ENCODE measurements at regions of chr16 and their contacts with region 1.

Region 1: DNA sequence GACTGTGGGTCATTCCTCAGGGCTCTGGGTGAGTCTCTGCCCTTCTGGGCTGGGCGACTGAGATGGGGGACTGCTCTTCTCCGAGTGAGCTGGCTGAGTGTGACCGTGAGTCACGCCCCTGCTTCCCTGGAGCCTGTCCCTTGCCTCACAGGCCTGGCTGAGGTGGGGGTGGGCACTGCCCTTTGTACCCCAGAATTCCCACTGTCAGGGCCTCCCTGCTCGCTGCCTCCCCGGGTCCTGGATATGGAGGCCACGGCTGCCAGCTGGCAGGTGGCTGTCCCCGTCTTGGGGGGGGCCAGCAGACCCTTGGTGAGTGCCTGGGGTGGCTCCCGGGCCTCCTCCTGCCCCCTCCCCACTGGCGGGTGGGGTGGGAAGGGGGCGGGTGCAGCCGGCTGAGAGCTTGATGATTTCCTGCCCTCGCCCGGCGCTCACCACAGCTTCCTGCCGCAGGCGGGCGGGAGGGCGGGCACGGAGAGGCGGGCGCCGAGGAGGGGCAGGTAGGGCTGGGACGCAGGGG is at the start of gene LAT:
- DNase-seq: peak; percentile 86
- ATAC-seq: peak; percentile 62
- H3K4me3 Mint-ChIP-seq: peak within 1 kb of the TSS; percentile 100
- H3K27ac Mint-ChIP-seq: peak within 1 kb of the TSS; percentile 95
- H3K4me1 Mint-ChIP-seq: peaks cover 51% of the 10 kb centered on the region
- H3K27me3 Mint-ChIP-seq: no peaks in the 10 kb centered on the region
- total RNA-seq, gene LAT: 270 to 288 TPM

Region 2: GRCh38 chr16:28974437-28975157 is 10.1 kb before region 1 on chr16 and contains the start of gene SPNS1:
- CTCF ChIA-PET with region 1: interaction called, 17 read pairs
- POLR2A ChIA-PET with region 1: interaction called, 12 read pairs
- DNase-seq: peak; percentile 97
- ATAC-seq: peak; percentile 96
- H3K4me3 Mint-ChIP-seq: peak within 1 kb of the TSS; percentile 98
- H3K27ac Mint-ChIP-seq: peak within 1 kb of the TSS; percentile 97
- H3K4me1 Mint-ChIP-seq: peaks cover 35% of the 10 kb centered on the region
- H3K27me3 Mint-ChIP-seq: no peaks in the 10 kb centered on the region
- total RNA-seq, gene SPNS1: 28.3 to 29.0 TPM

Region 3: DNA sequence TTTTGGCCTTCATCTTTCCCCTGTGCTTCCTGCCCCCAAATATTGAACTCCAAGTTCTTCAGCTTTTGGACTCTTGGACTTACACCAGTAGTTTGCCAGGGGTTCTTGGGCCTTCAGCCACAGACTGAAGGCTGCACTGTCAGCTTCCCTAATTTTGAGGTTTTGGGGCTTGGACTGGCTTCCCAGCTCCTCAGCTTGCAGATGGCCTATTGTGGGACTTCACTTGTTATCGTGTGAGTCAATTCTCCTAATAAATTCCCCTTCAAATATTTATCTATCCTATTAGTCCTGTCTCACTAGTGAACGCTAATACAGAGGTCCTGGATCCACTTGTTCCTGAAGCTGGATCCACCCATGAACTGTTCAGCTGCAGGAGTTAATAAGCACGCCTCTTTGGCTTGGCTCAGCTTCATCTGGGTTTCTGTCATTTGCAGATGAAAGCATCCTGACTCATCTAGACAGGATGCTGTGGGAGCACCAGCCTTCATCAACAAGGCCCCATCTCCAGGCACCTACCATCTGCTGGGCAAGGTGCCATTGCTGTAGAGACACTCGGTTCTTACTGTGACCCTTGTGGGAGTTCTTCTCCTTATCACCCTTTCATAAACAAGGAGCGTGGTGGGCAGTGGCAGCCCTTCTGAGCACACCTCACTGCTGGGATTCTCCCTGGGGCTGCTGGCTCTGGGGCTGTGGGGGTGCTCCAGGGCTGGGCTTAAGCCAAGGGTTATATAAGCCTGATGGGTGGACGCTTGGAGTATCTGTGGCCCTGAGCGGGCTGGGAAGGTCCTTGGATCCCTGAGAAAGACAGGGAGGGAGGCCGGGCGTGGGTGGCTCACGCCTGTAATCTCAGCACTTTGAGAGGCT is 23.3 kb after region 1 on chr16:
- CTCF ChIA-PET with region 1: interaction called, 15 read pairs
- POLR2A ChIA-PET with region 1: interaction called, 24 read pairs
- DNase-seq: peak; percentile 83
- ATAC-seq: peak; percentile 90
- H3K4me3 Mint-ChIP-seq: peak overlapping the region; percentile 19
- H3K27ac Mint-ChIP-seq: peak overlapping the region; percentile 88
- H3K4me1 Mint-ChIP-seq: peaks cover 43% of the 10 kb centered on the region
- H3K27me3 Mint-ChIP-seq: no peaks in the 10 kb centered on the region

Region 4: GRCh38 chr16:29012913-29013553 is 28.4 kb after region 1 on chr16:
- CTCF ChIA-PET with region 1: interaction called, 15 read pairs
- POLR2A ChIA-PET with region 1: interaction called, 24 read pairs
- DNase-seq: no peak
- ATAC-seq: peak; percentile 13
- H3K4me3 Mint-ChIP-seq: no peak overlapping the region
- H3K27ac Mint-ChIP-seq: peak overlapping the region; percentile 76
- H3K4me1 Mint-ChIP-seq: peaks cover 45% of the 10 kb centered on the region
- H3K27me3 Mint-ChIP-seq: no peaks in the 10 kb centered on the region

Region 5: DNA sequence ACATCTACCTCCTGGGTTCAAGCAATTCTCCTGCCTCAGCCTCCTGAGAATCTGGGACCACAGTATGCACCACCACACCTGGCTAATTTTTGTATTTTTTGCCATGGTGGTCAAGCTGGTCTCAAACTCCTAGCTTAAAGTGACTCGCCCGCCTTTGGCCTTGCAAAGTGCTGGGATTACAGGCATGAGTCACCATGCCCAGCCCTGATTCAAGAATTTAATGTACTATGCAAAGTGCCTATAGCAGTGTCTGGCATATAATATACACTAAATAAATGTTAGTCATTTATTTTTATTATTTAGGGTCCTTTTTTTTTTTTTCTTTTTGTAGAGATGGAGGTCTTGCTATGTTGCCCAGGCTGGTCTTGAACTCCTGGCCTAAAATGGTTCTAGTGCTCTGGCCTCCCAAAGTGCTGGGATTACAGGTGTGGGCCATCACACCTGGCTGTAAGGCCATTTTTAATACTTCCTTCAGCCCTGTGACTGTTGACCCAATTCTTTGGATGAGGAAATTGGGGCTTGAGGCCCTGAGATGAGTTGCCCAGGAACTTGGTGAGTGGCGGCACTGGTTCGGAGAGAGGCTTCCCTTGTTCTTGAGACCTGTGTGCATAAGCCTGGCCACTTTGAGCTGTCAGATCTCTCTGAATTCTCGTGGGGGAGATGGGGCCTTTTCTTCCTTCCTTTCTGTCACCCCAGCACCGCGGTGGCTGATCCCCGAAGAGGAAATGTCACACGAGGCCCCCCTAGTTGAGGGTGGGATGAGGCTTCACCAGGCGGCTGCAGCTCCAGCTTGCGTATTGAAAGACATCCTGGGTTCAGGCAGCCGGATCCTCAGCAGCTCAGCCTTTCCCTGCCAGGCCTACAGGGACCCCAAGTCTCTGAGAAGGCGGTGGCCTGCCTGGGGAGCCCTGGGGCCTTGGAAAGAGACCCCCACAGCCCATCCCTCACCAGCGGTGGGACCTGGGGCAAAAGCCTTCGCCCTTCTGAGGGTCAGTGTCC is 38.9 kb after region 1 on chr16:
- CTCF ChIA-PET with region 1: interaction called, 7 read pairs
- POLR2A ChIA-PET with region 1: interaction called, 15 read pairs
- DNase-seq: peak; percentile 41
- ATAC-seq: peak; percentile 48
- H3K4me3 Mint-ChIP-seq: no peak overlapping the region
- H3K27ac Mint-ChIP-seq: peak overlapping the region; percentile 89
- H3K4me1 Mint-ChIP-seq: peaks cover 54% of the 10 kb centered on the region
- H3K27me3 Mint-ChIP-seq: no peaks in the 10 kb centered on the region

Region 6: DNA sequence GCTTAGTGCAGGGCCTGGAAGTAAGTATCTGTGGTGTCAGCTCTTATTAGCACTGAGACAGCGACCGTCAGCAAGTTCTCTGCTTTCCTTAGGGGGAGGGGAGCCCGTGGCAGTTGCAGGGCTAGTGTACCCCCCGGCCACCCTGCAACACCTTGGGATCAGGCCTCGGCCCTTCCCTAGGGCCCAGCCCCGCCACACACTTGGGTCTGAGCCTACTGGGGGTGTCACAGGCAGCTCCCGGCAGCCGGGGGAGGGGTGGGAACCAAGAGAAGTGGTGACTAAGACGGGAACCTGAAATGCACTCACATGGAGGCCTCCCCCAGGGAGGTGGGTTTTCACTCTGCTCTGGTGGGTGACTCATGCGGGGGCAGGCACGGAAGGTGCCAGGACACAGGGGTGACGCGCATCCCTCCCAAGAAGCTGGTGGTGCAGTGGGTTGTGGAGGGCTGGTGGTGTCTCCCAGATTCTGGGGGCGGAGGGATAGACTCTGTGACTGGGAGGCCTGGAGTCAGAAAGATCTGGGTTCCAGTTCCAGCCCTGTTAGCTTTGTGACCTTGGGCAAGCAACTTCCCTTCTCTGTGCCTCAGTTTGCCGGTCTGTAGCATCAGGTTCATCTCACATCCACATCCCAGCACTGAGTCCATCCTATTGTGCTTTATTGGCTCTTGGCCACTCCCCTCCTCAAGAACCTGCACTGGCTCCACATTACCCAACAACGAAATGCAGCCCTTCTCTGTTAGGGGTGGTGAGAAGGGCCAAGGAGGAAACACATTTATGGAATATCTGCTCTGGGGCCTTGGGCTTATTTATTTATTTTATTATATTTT is 44.7 kb after region 1 on chr16:
- CTCF ChIA-PET with region 1: interaction called, 7 read pairs
- POLR2A ChIA-PET with region 1: interaction called, 15 read pairs
- DNase-seq: peak; percentile 73
- ATAC-seq: peak; percentile 71
- H3K4me3 Mint-ChIP-seq: no peak overlapping the region
- H3K27ac Mint-ChIP-seq: peak overlapping the region; percentile 74
- H3K4me1 Mint-ChIP-seq: peaks cover 33% of the 10 kb centered on the region
- H3K27me3 Mint-ChIP-seq: no peaks in the 10 kb centered on the region